ENCODE measurements at regions of chr10 and their contacts with region 1.

Region 1: GRCh38 chr10:128011175-128011979 is 104.5 kb downstream of the PTPRE start:
- DNase-seq: peak; percentile 90
- H3K4me3 Mint-ChIP-seq: no peak overlapping the region
- H3K27ac Mint-ChIP-seq: no peak overlapping the region
- H3K4me1 Mint-ChIP-seq: peaks cover 7% of the 10 kb centered on the region
- H3K27me3 Mint-ChIP-seq: peaks cover 7% of the 10 kb centered on the region

Region 2: DNA sequence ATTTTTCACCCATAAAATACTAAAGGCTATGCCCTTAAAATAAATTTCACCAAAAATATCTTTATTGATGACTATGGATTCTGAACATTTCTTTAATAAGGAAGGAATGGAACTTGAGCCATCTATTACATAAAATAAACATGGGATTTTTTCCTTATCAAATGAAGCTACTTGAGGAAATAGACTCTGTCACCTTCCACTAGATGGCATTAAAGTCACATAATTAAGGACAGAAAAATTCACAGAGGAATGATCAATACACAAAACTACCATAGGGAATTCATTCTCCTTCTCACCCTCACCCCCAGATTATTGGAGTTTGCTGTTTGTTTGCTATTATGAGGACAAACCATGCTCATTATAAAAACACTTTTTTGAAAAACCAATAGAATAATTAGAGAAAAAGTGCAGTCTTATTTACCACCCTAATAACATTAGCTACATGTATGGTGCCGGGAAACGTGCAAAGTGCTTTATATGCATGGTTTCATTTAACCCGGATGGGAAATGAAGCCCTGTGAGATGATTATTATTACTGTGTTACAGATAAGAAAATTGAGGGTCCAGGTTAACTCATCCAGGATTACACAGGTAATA is 295.5 kb before region 1 on chr10:
- CTCF ChIA-PET with region 1: no interaction called
- intact Hi-C with region 1: loop called (anchors 5 kb)
- DNase-seq: no peak
- H3K4me3 Mint-ChIP-seq: no peak overlapping the region
- H3K27ac Mint-ChIP-seq: no peak overlapping the region
- H3K4me1 Mint-ChIP-seq: no peaks in the 10 kb centered on the region
- H3K27me3 Mint-ChIP-seq: no peaks in the 10 kb centered on the region

Region 3: DNA sequence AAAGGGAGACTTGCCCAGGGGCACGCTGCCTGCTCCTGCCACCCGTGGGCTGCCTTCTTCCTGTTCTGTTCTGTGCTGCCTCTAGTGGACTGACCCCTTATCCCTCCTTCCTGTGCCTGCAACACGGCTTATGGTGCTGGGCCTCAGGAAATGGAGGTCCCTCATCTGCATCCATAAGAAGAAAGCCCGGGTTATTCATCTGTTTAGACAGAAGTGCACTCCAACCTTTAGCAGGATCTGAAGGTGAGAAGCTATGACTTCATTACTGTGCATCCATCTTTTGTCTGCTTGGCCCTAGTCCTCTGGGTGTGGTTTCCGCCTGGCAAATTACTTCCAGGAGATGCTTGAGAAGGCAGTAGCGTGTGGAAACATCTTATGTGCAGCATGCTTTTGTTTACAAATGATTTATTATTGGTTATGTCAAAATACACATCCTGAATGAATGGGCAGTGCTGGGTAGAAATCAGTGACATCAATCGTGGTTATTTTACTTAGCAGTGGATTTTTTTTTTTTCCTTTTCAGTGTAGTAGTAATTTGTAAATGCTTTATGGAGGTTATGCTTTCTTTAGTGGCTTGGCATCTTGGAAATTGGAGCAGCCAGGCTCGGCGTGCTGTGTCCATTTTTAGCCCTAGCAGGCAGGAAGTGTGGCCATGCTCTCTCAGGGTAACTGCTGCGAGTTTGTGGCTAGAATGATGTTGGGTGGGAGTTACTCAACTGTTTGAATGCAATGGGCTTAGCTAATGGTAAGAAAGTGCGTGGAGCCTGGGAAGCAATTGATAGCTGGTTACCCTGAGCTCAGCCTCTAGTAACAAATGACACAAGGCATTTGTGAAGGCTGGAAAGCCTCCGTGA is 91.7 kb before region 1 on chr10:
- CTCF ChIA-PET with region 1: interaction called, 28 read pairs
- intact Hi-C with region 1: no loop called
- DNase-seq: no peak
- H3K4me3 Mint-ChIP-seq: no peak overlapping the region
- H3K27ac Mint-ChIP-seq: no peak overlapping the region
- H3K4me1 Mint-ChIP-seq: peaks cover 7% of the 10 kb centered on the region
- H3K27me3 Mint-ChIP-seq: no peaks in the 10 kb centered on the region

Region 4: GRCh38 chr10:128000471-128001362 is 10.7 kb before region 1 on chr10:
- CTCF ChIA-PET with region 1: interaction called, 10 read pairs
- intact Hi-C with region 1: no loop called
- DNase-seq: no peak
- H3K4me3 Mint-ChIP-seq: no peak overlapping the region
- H3K27ac Mint-ChIP-seq: no peak overlapping the region
- H3K4me1 Mint-ChIP-seq: no peaks in the 10 kb centered on the region
- H3K27me3 Mint-ChIP-seq: peaks cover 38% of the 10 kb centered on the region

Region 5: GRCh38 chr10:128069351-128070051 is 58.1 kb after region 1 on chr10:
- CTCF ChIA-PET with region 1: interaction called, 10 read pairs
- intact Hi-C with region 1: loop called (anchors 1 kb)
- DNase-seq: peak; percentile 87
- H3K4me3 Mint-ChIP-seq: no peak overlapping the region
- H3K27ac Mint-ChIP-seq: no peak overlapping the region
- H3K4me1 Mint-ChIP-seq: peaks cover 33% of the 10 kb centered on the region
- H3K27me3 Mint-ChIP-seq: no peaks in the 10 kb centered on the region

Measured in activated naive CD4-positive, alpha-beta T cell treated with anti-CD3 and anti-CD28 coated beads for 36 hours (primary cell).